ENCODE measurements at regions of chr10 and their contacts with region 1.

Region 1: GRCh38 chr10:3043512-3044368 is 23.6 kb upstream of the PFKP start:
- DNase-seq: peak; percentile 80
- ATAC-seq: peak; percentile 80
- H3K4me3 ChIP-seq: no peak overlapping the region
- H3K4me3 Mint-ChIP-seq: no peak overlapping the region
- H3K27ac ChIP-seq: no peak overlapping the region
- H3K27ac Mint-ChIP-seq: no peak overlapping the region
- H3K4me1 ChIP-seq: no peaks in the 10 kb centered on the region
- H3K4me1 Mint-ChIP-seq: peaks cover 5% of the 10 kb centered on the region
- H3K27me3 ChIP-seq: peaks cover 0 to 24% (median 0%) of the 10 kb centered on the region in 4 experiments
- H3K27me3 Mint-ChIP-seq: peaks cover 7% of the 10 kb centered on the region
- CTCF ChIP-seq: peak; percentile 89

Region 2: DNA sequence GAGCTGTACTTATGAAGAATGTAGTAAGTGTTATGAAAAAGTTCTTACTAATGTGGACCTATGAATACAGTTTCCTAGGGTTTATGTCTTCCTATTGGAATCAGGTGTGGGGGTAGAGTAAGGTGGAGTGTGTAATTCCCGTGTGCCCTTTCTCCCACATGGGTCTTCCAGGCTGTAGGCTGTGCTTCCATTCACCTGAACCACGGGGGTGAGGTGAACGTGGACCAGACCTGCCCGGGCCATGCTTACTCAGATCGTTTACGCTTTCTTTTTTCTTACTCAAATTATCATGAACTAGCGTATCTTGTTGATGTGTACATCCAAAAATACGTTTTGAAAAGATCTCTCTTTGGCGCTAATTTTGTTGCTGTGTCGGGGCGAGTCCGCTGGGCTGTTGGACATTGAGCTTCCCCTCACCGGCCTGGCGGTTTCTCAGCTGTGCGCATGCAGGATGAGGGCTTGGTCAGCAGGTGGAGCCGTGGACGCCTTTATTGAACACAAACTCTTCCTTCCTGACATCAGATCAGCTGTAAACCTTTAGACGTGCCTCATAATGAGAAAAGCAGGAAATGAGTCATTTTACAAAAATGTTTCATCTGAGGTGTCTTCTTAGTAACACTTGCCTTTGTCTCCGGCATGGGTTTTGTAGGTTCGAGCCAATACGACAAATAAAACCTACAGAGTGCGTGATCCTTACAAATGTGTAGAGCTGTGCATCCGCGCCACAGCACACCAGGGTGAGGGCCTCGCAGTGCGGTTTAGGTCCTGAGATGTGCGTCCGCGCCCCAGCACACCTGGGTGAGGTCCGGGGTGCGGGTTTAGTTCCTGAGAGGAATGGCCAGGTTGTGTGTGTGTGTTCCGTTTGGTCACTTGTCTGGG is 1933.7 kb before region 1 on chr10:
- CTCF ChIA-PET with region 1: interaction called, 12 read pairs
- POLR2A ChIA-PET with region 1: no interaction called
- intact Hi-C with region 1: no loop called
- DNase-seq: peak; percentile 41
- ATAC-seq: peak; percentile 83
- H3K4me3 ChIP-seq: no peak overlapping the region
- H3K4me3 Mint-ChIP-seq: no peak overlapping the region
- H3K27ac ChIP-seq: no peak overlapping the region
- H3K27ac Mint-ChIP-seq: peak overlapping the region; percentile 64
- H3K4me1 ChIP-seq: no peaks in the 10 kb centered on the region
- H3K4me1 Mint-ChIP-seq: peaks cover 8% of the 10 kb centered on the region
- H3K27me3 ChIP-seq: no peaks in the 10 kb centered on the region
- H3K27me3 Mint-ChIP-seq: no peaks in the 10 kb centered on the region
- CTCF ChIP-seq: peak; percentile 61

Region 3: DNA sequence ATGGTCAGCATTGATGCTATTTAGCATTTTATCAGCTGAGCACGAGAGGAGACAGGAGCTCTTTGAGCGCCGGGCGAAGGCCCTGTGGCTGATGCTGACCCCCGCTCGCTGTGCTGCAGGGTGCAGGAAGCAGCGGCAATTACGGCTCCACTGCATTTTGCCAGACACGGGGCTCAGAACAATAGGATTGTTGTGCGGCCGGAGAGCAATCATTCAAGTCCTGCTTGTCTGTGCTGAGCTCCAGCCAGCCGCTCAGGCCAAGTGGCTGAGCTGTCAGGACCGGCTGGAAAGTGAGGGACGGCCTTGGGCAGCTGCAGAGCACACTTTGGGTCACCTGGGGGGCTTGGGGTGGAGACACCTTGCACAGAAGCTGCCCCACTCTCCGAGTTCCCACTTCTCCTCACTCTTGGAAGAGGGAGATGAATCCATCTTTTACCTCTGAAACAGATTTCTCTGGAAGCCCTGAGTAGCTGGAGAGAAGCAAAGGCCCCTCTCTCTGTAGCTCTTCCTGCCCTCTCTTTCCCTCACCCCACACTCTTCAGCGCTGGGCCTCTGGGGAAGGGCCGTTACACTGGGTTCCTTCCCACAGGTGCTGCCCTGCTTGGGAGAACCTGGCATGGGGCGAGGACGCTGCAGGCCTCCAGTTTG is 1289.1 kb before region 1 on chr10:
- CTCF ChIA-PET with region 1: interaction called, 3 read pairs
- POLR2A ChIA-PET with region 1: no interaction called
- intact Hi-C with region 1: loop called (anchors 5 kb)
- DNase-seq: no peak
- ATAC-seq: no peak
- H3K4me3 ChIP-seq: no peak overlapping the region
- H3K4me3 Mint-ChIP-seq: no peak overlapping the region
- H3K27ac ChIP-seq: no peak overlapping the region
- H3K27ac Mint-ChIP-seq: no peak overlapping the region
- H3K4me1 ChIP-seq: peaks cover 0 to 2% of the 10 kb centered on the region in 2 donors
- H3K4me1 Mint-ChIP-seq: peaks cover 2% of the 10 kb centered on the region
- H3K27me3 ChIP-seq: peaks cover 0 to 4% (median 3%) of the 10 kb centered on the region in 4 experiments
- H3K27me3 Mint-ChIP-seq: peaks cover 27% of the 10 kb centered on the region
- CTCF ChIP-seq: no peak

Region 4: GRCh38 chr10:2839081-2839725 is 204.5 kb before region 1 on chr10:
- CTCF ChIA-PET with region 1: interaction called, 35 read pairs
- POLR2A ChIA-PET with region 1: no interaction called
- intact Hi-C with region 1: no loop called
- DNase-seq: peak; percentile 31
- ATAC-seq: no peak
- H3K4me3 ChIP-seq: no peak overlapping the region
- H3K4me3 Mint-ChIP-seq: no peak overlapping the region
- H3K27ac ChIP-seq: no peak overlapping the region
- H3K27ac Mint-ChIP-seq: no peak overlapping the region
- H3K4me1 ChIP-seq: no peaks in the 10 kb centered on the region
- H3K4me1 Mint-ChIP-seq: no peaks in the 10 kb centered on the region
- H3K27me3 ChIP-seq: no peaks in the 10 kb centered on the region
- H3K27me3 Mint-ChIP-seq: peaks cover 18% of the 10 kb centered on the region
- CTCF ChIP-seq: peak; percentile 43

Region 5: DNA sequence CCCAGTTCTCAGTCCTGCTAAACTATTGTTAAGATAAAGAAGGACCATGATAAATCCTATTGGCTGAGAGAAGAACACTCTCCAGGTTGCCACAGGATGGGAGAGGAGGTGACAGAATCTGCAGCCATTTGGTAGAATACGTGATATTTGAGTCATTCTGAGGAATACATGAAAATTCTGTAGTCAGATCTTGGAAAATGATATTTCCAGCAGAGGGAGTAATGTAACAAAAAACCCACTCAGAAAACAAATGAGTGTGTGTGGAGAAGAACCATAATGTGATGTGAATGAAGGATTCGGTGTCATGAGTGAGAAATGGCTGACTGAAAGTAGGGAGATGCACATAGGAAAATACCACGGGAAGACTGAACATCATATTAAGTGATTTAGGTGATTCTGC is 104.9 kb before region 1 on chr10:
- CTCF ChIA-PET with region 1: interaction called, 15 read pairs
- POLR2A ChIA-PET with region 1: no interaction called
- intact Hi-C with region 1: loop called (anchors 1 kb)
- DNase-seq: no peak
- ATAC-seq: no peak
- H3K4me3 ChIP-seq: no peak overlapping the region
- H3K4me3 Mint-ChIP-seq: no peak overlapping the region
- H3K27ac ChIP-seq: no peak overlapping the region
- H3K27ac Mint-ChIP-seq: no peak overlapping the region
- H3K4me1 ChIP-seq: no peaks in the 10 kb centered on the region
- H3K4me1 Mint-ChIP-seq: no peaks in the 10 kb centered on the region
- H3K27me3 ChIP-seq: peaks cover 0 to 4% (median 0%) of the 10 kb centered on the region in 4 experiments
- H3K27me3 Mint-ChIP-seq: peaks cover 52% of the 10 kb centered on the region
- CTCF ChIP-seq: no peak

Region 6: DNA sequence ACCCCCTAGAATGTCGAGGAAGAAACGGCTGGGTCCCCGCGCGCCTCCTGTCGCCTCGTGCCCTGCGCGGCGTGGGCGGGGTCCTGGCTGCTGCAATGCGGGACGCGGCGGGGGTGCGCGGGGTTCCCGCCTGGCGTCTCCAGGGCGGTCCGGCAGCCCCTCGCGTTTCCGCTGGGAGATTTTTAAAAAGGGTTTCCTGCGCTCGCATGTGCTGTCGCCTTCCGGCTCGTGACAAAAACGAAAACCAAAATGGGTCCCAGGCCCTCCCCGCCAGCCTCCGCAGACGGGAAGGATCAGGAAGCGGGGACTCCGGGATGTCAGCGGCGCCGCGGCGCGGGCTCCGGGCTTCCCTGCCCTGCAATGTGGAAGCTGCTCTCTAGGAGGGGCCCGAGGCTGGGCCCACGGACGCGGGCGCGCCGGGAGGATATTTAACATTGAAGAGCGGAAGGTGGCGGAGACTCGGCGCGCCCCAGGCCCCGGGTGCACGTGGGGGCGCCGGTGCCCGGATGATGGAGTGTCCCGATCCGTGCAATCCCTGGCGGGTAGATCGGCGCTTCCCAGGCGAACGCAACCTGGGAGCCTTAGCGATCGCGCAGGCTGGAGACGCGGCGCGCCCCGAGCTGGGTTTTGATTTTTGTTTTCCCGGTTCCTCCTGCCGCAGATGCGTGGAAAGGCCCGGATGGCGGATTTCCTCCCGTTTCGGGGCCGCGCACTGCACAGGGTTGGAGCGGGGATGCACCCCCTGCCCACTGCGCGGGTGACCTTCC is 24.6 kb after region 1 on chr10:
- CTCF ChIA-PET with region 1: interaction called, 11 read pairs
- POLR2A ChIA-PET with region 1: no interaction called
- intact Hi-C with region 1: no loop called
- DNase-seq: peak; percentile 70
- ATAC-seq: peak; percentile 28
- H3K4me3 ChIP-seq: peak overlapping the region; percentile 37 to 95 (median 88)
- H3K4me3 Mint-ChIP-seq: peak overlapping the region; percentile 94
- H3K27ac ChIP-seq: peak overlapping the region; percentile 41 to 68
- H3K27ac Mint-ChIP-seq: peak overlapping the region; percentile 87
- H3K4me1 ChIP-seq: peaks cover 8 to 15% of the 10 kb centered on the region in 2 donors
- H3K4me1 Mint-ChIP-seq: peaks cover 41% of the 10 kb centered on the region
- H3K27me3 ChIP-seq: peaks cover 0 to 8% (median 0%) of the 10 kb centered on the region in 4 experiments
- H3K27me3 Mint-ChIP-seq: peaks cover 6% of the 10 kb centered on the region
- CTCF ChIP-seq: no peak

Region 7: GRCh38 chr10:3099291-3100092 is 55.8 kb after region 1 on chr10:
- CTCF ChIA-PET with region 1: no interaction called
- POLR2A ChIA-PET with region 1: no interaction called
- intact Hi-C with region 1: no loop called
- DNase-seq: no peak
- ATAC-seq: no peak
- H3K4me3 ChIP-seq: no peak overlapping the region
- H3K4me3 Mint-ChIP-seq: no peak overlapping the region
- H3K27ac ChIP-seq: no peak overlapping the region
- H3K27ac Mint-ChIP-seq: no peak overlapping the region
- H3K4me1 ChIP-seq: peaks cover 0 to 4% of the 10 kb centered on the region in 2 donors
- H3K4me1 Mint-ChIP-seq: peaks cover 9% of the 10 kb centered on the region
- H3K27me3 ChIP-seq: no peaks in the 10 kb centered on the region
- H3K27me3 Mint-ChIP-seq: no peaks in the 10 kb centered on the region
- CTCF ChIP-seq: no peak

Region 8: GRCh38 chr10:3911713-3912442 is 868.1 kb after region 1 on chr10:
- CTCF ChIA-PET with region 1: no interaction called
- POLR2A ChIA-PET with region 1: no interaction called
- intact Hi-C with region 1: no loop called
- DNase-seq: no peak
- ATAC-seq: no peak
- H3K4me3 ChIP-seq: no peak overlapping the region
- H3K4me3 Mint-ChIP-seq: no peak overlapping the region
- H3K27ac ChIP-seq: no peak overlapping the region
- H3K27ac Mint-ChIP-seq: peak overlapping the region; percentile 4
- H3K4me1 ChIP-seq: peaks cover 0 to 11% of the 10 kb centered on the region in 2 donors
- H3K4me1 Mint-ChIP-seq: peaks cover 10% of the 10 kb centered on the region
- H3K27me3 ChIP-seq: no peaks in the 10 kb centered on the region
- H3K27me3 Mint-ChIP-seq: no peaks in the 10 kb centered on the region
- CTCF ChIP-seq: no peak

Region 9: GRCh38 chr10:4755299-4755989 is 1711.7 kb after region 1 on chr10:
- CTCF ChIA-PET with region 1: no interaction called
- POLR2A ChIA-PET with region 1: no interaction called
- intact Hi-C with region 1: no loop called
- DNase-seq: no peak
- ATAC-seq: no peak
- H3K4me3 ChIP-seq: no peak overlapping the region
- H3K4me3 Mint-ChIP-seq: no peak overlapping the region
- H3K27ac ChIP-seq: no peak overlapping the region
- H3K27ac Mint-ChIP-seq: no peak overlapping the region
- H3K4me1 ChIP-seq: no peaks in the 10 kb centered on the region
- H3K4me1 Mint-ChIP-seq: no peaks in the 10 kb centered on the region
- H3K27me3 ChIP-seq: no peaks in the 10 kb centered on the region
- H3K27me3 Mint-ChIP-seq: peaks cover 6% of the 10 kb centered on the region
- CTCF ChIP-seq: no peak

Measured in B cell (primary cell).